Testis (tissue), 5 donors: ENCODE measurements at regions of chr1 and their contacts with region 1.

Region 1: GRCh38 chr1:25503551-25504426 is 39.6 kb upstream of the LDLRAP1 start:
- DNase-seq: peak; percentile 65
- H3K4me3 ChIP-seq: no peak overlapping the region
- H3K27ac ChIP-seq: no peak overlapping the region
- H3K4me1 ChIP-seq: peaks cover 27% of the 10 kb centered on the region
- H3K27me3 ChIP-seq: no peaks in the 10 kb centered on the region
- CTCF ChIP-seq: peak in 1 of 3 experiments; percentile 26
- POLR2A ChIP-seq: no peak

Region 2: DNA sequence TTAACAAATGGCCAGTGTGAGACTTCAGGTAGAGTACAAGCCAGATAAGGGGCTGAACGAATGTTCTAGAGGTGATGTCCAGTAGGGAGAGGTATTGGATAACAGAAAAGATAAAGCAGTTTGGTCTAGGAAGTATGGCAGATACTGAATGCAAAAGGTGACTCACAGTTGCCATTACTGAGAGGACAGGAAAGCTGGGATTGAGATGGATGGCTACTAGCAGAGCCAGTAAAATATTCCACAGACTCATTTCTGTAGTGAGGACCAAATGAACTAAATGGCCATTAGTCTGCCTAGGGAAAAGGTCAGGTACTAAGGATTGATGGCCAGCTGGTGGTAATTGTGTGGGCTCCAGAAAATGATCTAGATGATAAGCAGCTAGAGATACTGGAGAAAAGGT is 61.6 kb before region 1 on chr1:
- intact Hi-C with region 1: loop called (anchors 10 kb)
- DNase-seq: no peak
- H3K4me3 ChIP-seq: no peak overlapping the region
- H3K27ac ChIP-seq: no peak overlapping the region
- H3K4me1 ChIP-seq: no peaks in the 10 kb centered on the region
- H3K27me3 ChIP-seq: no peaks in the 10 kb centered on the region
- CTCF ChIP-seq: no peak
- POLR2A ChIP-seq: no peak